A549 (cell line): ENCODE measurements at regions of chr16 and their contacts with region 1.

Region 1: GRCh38 chr16:66660422-66661209 is 35.9 kb downstream of the CMTM4 start:
- DNase-seq: peak; percentile 72 to 84
- ATAC-seq: peak; percentile 96 to 97
- H3K4me3 ChIP-seq: peak overlapping the region; percentile 5; the same call in 1 of the 3 replicates
- H3K27ac ChIP-seq: peak overlapping the region; percentile 72 to 86
- H3K4me1 ChIP-seq: peaks cover 30% of the 10 kb centered on the region
- CTCF ChIP-seq: no peak
- EP300 ChIP-seq: no peak
- POLR2A ChIP-seq: no peak
- RAD21 ChIP-seq: 0 out of 5 replicates have a peak, but pooled peaks of 1 of the 2 experiments have one; percentile 24

Region 2: DNA sequence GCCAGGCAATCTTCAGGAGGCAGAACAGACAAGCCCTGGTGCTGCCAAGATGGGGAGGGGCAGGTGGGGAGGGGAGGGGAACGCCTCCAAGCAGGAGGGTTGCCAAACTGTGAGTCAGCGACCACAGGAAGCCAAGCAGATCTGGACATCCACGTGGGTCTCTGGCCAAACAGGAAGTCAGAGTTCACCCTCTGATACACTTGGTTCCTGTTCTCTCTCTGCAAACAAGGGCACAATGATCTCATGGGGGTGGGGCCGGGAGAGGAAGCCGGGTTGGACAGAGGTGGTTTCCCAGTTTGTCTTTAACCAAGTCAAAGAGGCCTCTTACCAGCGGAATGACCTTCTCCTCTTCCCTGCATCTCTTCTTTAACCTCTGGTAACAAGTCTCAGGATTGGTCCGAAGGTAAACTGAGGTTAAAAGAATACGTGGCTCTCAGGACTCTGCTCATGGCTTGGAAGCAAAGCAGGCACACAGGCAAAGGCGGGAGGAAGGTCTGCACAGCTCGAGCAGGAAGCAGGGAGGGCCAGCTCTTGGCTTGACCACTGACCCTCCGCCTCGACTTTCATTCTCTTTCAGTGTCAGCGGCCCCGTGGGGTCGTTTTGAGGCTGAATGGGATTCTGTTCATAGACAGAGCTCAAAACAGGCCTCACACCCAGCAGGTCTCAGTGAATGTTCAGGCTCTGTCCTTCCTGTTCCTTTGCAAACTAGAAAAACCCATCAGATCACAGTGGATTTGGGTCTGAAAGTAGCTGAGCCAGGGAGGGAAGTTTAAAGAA is 143.6 kb before region 1 on chr16:
- CTCF ChIA-PET with region 1: no interaction called
- POLR2A ChIA-PET with region 1: no interaction called
- DNase-seq: peak; percentile 98 to 99
- ATAC-seq: peak; percentile 82 to 87
- H3K4me3 ChIP-seq: peak overlapping the region; percentile 22; the same call in 2 of the 3 replicates
- H3K27ac ChIP-seq: peak overlapping the region; percentile 92 to 95
- H3K4me1 ChIP-seq: peaks cover 55% of the 10 kb centered on the region
- CTCF ChIP-seq: no peak
- EP300 ChIP-seq: peak; percentile 87 to 88; a peak in 4 of 5 replicates
- POLR2A ChIP-seq: no peak
- RAD21 ChIP-seq: peak in 1 of 2 experiments; percentile 33; a peak in 2 of 5 replicates

Region 3: DNA sequence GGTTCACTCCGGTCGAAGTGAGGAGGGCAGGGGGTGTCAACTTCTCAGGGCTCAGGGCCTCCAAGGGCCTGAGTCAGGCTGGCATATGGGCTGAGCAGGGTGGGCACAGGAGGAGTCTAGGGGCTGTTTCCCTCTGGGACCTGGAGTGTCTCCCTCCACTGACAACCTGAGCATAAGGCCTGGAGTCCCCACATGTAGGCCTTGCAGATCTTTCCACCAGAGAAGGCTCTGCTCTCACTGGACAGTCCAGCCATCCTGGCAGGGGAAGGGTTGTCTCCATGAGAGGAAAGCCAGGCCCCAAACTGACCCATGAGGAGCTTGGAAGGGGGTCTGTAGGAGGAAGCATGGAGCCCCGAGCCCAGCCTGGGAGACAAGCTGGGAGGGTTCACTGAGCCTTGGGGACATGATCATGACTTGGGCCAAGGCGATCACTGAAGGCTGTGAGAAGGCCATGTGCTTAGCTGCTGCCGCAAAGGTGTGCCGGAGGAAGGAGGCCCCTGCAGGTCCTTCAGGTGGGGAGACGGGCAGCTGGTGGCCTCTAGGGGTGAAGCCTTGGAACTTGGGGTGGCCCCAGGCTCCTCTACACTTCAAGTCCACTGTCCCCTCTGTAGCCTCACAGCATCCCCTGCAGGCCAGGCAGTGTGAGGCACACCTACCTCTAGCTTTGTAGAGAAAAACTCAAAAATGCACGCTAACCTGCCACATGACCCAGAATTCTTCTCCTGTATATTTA is 71.5 kb before region 1 on chr16:
- CTCF ChIA-PET with region 1: no interaction called
- POLR2A ChIA-PET with region 1: no interaction called
- DNase-seq: peak; percentile 42 to 68
- ATAC-seq: peak; percentile 89 to 95; a peak in 5 of 6 replicates
- H3K4me3 ChIP-seq: no peak overlapping the region
- H3K27ac ChIP-seq: 0 out of 6 replicates have a peak overlapping the region, but pooled peaks of 1 of the 2 experiments have one; percentile 35
- H3K4me1 ChIP-seq: no peaks in the 10 kb centered on the region
- CTCF ChIP-seq: peak; percentile 49
- EP300 ChIP-seq: no peak
- POLR2A ChIP-seq: no peak
- RAD21 ChIP-seq: peak; percentile 65 to 82

Region 4: DNA sequence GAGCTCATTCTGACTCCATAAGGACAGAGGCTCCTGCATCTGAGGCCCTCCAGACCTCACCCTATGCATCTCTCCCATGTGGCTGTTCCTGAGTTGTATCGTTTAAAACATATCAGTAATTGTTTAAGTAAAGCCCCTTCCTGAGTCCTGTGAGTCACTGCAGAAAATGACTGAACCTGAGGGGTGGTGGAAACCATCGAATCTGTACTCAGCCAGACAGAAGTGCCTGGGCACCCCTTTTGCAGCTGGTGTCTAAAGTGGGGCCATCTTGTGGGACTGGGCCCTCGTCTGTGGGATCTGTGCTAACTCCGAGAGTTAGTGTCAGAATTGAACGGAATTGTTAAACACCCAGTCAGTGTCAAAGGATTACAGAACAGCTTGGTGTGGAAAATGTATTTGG is 30.8 kb before region 1 on chr16:
- CTCF ChIA-PET with region 1: no interaction called
- POLR2A ChIA-PET with region 1: no interaction called
- DNase-seq: no peak
- ATAC-seq: no peak
- H3K4me3 ChIP-seq: no peak overlapping the region
- H3K27ac ChIP-seq: no peak overlapping the region
- H3K4me1 ChIP-seq: no peaks in the 10 kb centered on the region
- CTCF ChIP-seq: no peak
- EP300 ChIP-seq: no peak
- POLR2A ChIP-seq: no peak
- RAD21 ChIP-seq: no peak

Region 5: GRCh38 chr16:66677179-66677578 is 16.6 kb after region 1 on chr16:
- CTCF ChIA-PET with region 1: interaction called, 53 read pairs
- POLR2A ChIA-PET with region 1: interaction called, 12 read pairs
- DNase-seq: no peak
- ATAC-seq: no peak
- H3K4me3 ChIP-seq: no peak overlapping the region
- H3K27ac ChIP-seq: no peak overlapping the region
- H3K4me1 ChIP-seq: no peaks in the 10 kb centered on the region
- CTCF ChIP-seq: no peak
- EP300 ChIP-seq: no peak
- POLR2A ChIP-seq: no peak
- RAD21 ChIP-seq: no peak

Region 6: DNA sequence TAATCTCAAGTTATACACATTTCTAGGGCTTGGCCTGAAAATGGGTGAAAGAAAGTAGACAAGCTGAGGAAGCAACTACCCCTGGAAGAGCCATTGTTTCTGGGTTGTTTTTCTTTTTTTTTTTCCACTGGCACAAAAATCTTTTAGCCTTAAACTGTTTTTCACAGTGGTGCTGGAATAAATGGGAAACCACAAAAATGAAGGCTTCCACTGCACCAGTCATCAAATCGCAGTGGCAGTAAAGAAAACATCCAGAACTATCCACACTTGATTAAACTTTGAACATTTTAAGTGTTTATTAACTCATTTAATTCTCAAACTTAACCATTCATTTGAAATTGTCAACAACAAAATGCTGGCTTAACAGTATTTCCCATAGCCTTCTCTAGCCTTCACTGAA is 21.7 kb after region 1 on chr16:
- CTCF ChIA-PET with region 1: interaction called, 53 read pairs
- POLR2A ChIA-PET with region 1: interaction called, 12 read pairs
- DNase-seq: no peak
- ATAC-seq: no peak
- H3K4me3 ChIP-seq: no peak overlapping the region
- H3K27ac ChIP-seq: no peak overlapping the region
- H3K4me1 ChIP-seq: no peaks in the 10 kb centered on the region
- CTCF ChIP-seq: no peak
- EP300 ChIP-seq: no peak
- POLR2A ChIP-seq: no peak
- RAD21 ChIP-seq: no peak

Region 7: GRCh38 chr16:66696669-66697630 is 36.3 kb after region 1 on chr16 and contains the start of gene CMTM4:
- CTCF ChIA-PET with region 1: interaction called, 16 read pairs
- POLR2A ChIA-PET with region 1: interaction called, 5 read pairs
- DNase-seq: peak; percentile 81 to 84
- ATAC-seq: peak; percentile 89 to 93
- H3K4me3 ChIP-seq: peak within 1 kb of the TSS; percentile 79
- H3K27ac ChIP-seq: peak within 1 kb of the TSS; percentile 79 to 93
- H3K4me1 ChIP-seq: peaks cover 29% of the 10 kb centered on the region
- CTCF ChIP-seq: peak; percentile 56
- EP300 ChIP-seq: no peak
- POLR2A ChIP-seq: peak; percentile 25; the same call in 1 of the 2 replicates
- RAD21 ChIP-seq: no peak
- polyA plus RNA-seq, gene CMTM4: 58.6 and 61.6 TPM in 2 replicates

Region 8: DNA sequence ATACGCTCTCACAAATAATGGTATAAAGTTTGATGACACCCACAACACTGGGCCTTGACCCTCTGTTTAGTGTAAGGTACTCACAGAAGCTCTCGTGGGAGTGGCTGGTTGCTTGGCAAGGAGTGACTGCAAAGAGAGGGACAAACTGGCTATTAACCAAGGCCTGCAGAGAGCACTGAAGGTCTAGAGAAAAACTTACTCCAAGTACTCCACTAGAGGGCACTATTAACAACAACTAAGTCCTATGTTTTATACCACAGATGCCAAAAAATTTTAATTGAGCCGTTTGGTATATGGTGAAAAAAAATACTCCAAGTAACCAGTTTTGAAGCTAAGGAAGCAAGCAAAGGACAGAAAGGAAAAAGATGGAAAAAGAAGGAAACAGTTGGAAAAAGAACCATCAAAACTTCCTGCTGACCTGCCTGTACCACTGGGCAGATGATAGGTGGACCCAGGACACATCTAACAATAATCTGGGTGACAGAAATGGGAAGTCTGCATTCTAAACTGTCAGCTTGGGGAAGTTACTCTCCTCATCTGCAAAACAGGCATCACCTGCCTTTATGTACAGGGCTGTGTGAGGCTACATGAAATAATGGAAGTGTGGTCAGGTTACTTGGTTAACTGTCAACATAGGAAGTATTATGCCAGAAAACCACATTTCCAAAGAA is 67.6 kb after region 1 on chr16:
- CTCF ChIA-PET with region 1: interaction called, 35 read pairs
- POLR2A ChIA-PET with region 1: no interaction called
- DNase-seq: peak; percentile 61 to 66
- ATAC-seq: peak; percentile 90 to 94
- H3K4me3 ChIP-seq: no peak overlapping the region
- H3K27ac ChIP-seq: no peak overlapping the region
- H3K4me1 ChIP-seq: no peaks in the 10 kb centered on the region
- CTCF ChIP-seq: peak; percentile 80
- EP300 ChIP-seq: no peak
- POLR2A ChIP-seq: no peak
- RAD21 ChIP-seq: peak; percentile 37 to 52; a peak in 3 of 5 replicates

Region 9: GRCh38 chr16:66740010-66740409 is 79.4 kb after region 1 on chr16:
- CTCF ChIA-PET with region 1: interaction called, 18 read pairs
- POLR2A ChIA-PET with region 1: interaction called, 7 read pairs
- DNase-seq: peak; percentile 51 to 80
- ATAC-seq: peak; percentile 67 to 78; a peak in 4 of 6 replicates
- H3K4me3 ChIP-seq: no peak overlapping the region
- H3K27ac ChIP-seq: peak overlapping the region; percentile 83 to 88
- H3K4me1 ChIP-seq: peaks cover 43% of the 10 kb centered on the region
- CTCF ChIP-seq: peak; percentile 63
- EP300 ChIP-seq: no peak
- POLR2A ChIP-seq: no peak
- RAD21 ChIP-seq: peak in 1 of 2 experiments; percentile 18; a peak in 2 of 5 replicates